ENCODE measurements at regions of chr21 and their contacts with region 1.

Region 1: DNA sequence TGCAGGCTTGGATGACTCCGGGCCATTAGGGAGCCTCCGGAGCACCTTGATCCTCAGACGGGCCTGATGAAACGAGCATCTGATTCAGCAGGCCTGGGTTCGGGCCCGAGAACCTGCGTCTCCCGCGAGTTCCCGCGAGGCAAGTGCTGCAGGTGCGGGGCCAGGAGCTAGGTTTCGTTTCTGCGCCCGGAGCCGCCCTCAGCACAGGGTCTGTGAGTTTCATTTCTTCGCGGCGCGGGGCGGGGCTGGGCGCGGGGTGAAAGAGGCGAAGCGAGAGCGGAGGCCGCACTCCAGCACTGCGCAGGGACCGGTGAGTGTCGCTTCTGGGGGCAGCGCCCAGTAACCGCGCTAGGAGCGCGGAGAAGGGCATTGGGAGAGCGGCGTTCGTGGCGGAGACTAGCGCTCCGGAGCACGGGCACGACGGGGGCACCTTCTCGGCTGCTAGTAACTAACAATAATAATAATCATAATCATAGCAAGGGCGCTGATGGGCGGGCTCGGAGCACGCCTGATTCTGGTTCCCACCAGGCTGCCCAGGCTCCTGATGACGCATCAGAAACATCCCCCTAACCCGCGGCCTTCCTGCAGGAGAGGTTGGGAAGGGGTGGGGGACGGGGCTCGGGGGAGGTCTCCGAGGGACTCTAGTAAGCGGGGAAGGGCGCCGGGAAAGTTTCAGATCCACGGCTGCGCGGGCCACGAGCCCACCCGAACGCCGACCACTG is at the start of gene MX1:
- DNase-seq: peak; percentile 96
- ATAC-seq: peak; percentile 94
- H3K4me3 Mint-ChIP-seq: peak within 1 kb of the TSS; percentile 93
- H3K27ac Mint-ChIP-seq: peak within 1 kb of the TSS; percentile 98
- H3K4me1 Mint-ChIP-seq: peaks cover 54% of the 10 kb centered on the region
- H3K27me3 Mint-ChIP-seq: no peaks in the 10 kb centered on the region
- total RNA-seq, gene MX1: 162 to 169 TPM

Region 2: GRCh38 chr21:41361786-41362604 is 64.1 kb before region 1 on chr21 and contains the start of gene MX2:
- CTCF ChIA-PET with region 1: interaction called, 3 read pairs
- POLR2A ChIA-PET with region 1: interaction called, 3 read pairs
- intact Hi-C with region 1: loop called in 1 of 2 experiments (anchors 1 kb)
- DNase-seq: peak; percentile 87
- ATAC-seq: peak; percentile 79
- H3K4me3 Mint-ChIP-seq: peak within 1 kb of the TSS; percentile 77
- H3K27ac Mint-ChIP-seq: peak within 1 kb of the TSS; percentile 97
- H3K4me1 Mint-ChIP-seq: peaks cover 56% of the 10 kb centered on the region
- H3K27me3 Mint-ChIP-seq: no peaks in the 10 kb centered on the region
- total RNA-seq, gene MX2: 30.7 to 40.4 TPM

Region 3: GRCh38 chr21:41369105-41369919 is 56.8 kb before region 1 on chr21:
- CTCF ChIA-PET with region 1: no interaction called
- POLR2A ChIA-PET with region 1: interaction called, 3 read pairs
- intact Hi-C with region 1: loop called in 1 of 2 experiments (anchors 2 kb)
- DNase-seq: peak; percentile 67
- ATAC-seq: peak; percentile 77
- H3K4me3 Mint-ChIP-seq: peak overlapping the region; percentile 68
- H3K27ac Mint-ChIP-seq: peak overlapping the region; percentile 87
- H3K4me1 Mint-ChIP-seq: peaks cover 79% of the 10 kb centered on the region
- H3K27me3 Mint-ChIP-seq: no peaks in the 10 kb centered on the region